ENCODE measurements at regions of chr7 and their contacts with region 1.

Region 1: DNA sequence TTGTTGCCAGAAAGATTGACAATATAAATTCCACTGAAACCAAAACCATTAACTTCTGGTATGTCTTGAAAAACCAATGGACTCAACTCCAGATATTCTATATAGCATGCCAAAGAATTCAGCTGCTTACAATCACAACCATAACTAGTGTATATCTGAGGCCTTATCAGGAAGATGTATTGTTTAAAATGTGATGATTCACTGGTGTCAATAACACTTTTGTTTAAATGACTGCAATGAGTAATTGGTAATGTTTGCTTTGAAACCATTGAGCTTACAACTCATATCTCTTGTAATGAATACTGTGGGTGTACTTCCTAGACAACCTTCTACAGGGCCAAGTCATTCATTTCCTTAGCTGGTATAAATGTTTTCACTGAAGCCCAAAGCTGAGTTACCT is 727.9 kb upstream of the KCND2 start:
- DNase-seq: peak; percentile 92
- ATAC-seq: peak; percentile 91
- H3K4me3 ChIP-seq: no peak overlapping the region
- H3K27ac ChIP-seq: peak overlapping the region; percentile 67
- H3K4me1 ChIP-seq: peaks cover 33% of the 10 kb centered on the region
- H3K27me3 ChIP-seq: no peaks in the 10 kb centered on the region
- CTCF ChIP-seq: no peak

Region 2: GRCh38 chr7:118902600-118902999 is 642.5 kb before region 1 on chr7:
- CTCF ChIA-PET with region 1: no interaction called
- POLR2A ChIA-PET with region 1: no interaction called
- intact Hi-C with region 1: no loop called
- DNase-seq: no peak
- ATAC-seq: no peak
- H3K4me3 ChIP-seq: no peak overlapping the region
- H3K27ac ChIP-seq: no peak overlapping the region
- H3K4me1 ChIP-seq: no peaks in the 10 kb centered on the region
- H3K27me3 ChIP-seq: no peaks in the 10 kb centered on the region
- CTCF ChIP-seq: no peak

Region 3: GRCh38 chr7:119452401-119452800 is 92.7 kb before region 1 on chr7:
- CTCF ChIA-PET with region 1: no interaction called
- POLR2A ChIA-PET with region 1: no interaction called
- intact Hi-C with region 1: loop called (anchors 1 kb)
- DNase-seq: peak; percentile 49
- ATAC-seq: peak; percentile 91
- H3K4me3 ChIP-seq: 0 out of 2 replicates have a peak overlapping the region, but pooled peaks have one; percentile 32
- H3K27ac ChIP-seq: peak overlapping the region; percentile 30; the same call in 1 of the 2 replicates
- H3K4me1 ChIP-seq: peaks cover 13% of the 10 kb centered on the region; the same call in 1 of the 2 replicates
- H3K27me3 ChIP-seq: no peaks in the 10 kb centered on the region
- CTCF ChIP-seq: no peak

Region 4: DNA sequence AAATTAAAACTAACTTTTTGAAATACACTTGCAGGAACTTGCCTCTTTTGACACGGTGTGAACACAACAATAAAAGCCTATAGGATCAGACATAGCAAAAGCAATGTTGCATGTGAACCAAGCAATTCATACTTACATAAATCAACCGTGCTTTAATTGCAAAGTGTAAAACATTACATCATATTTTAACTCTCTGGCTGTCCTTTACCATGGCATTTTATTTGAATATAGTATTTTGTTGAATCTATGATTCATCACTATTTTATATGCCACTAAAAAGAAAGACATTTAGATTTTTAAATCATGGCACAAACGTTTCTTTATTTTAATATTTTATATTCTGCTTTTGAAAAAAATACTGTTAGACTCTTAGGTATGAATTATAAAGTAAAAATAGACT is 29.2 kb before region 1 on chr7:
- CTCF ChIA-PET with region 1: no interaction called
- POLR2A ChIA-PET with region 1: no interaction called
- intact Hi-C with region 1: loop called (anchors 1 kb)
- DNase-seq: peak; percentile 25
- ATAC-seq: peak; percentile 91
- H3K4me3 ChIP-seq: no peak overlapping the region
- H3K27ac ChIP-seq: peak overlapping the region; percentile 37; the same call in 1 of the 2 replicates
- H3K4me1 ChIP-seq: peaks cover 7% of the 10 kb centered on the region; the same call in 1 of the 2 replicates
- H3K27me3 ChIP-seq: no peaks in the 10 kb centered on the region
- CTCF ChIP-seq: no peak

Measured in PC-3 (cell line).